ENCODE measurements at regions of chr5 and their contacts with region 1.

Region 1: DNA sequence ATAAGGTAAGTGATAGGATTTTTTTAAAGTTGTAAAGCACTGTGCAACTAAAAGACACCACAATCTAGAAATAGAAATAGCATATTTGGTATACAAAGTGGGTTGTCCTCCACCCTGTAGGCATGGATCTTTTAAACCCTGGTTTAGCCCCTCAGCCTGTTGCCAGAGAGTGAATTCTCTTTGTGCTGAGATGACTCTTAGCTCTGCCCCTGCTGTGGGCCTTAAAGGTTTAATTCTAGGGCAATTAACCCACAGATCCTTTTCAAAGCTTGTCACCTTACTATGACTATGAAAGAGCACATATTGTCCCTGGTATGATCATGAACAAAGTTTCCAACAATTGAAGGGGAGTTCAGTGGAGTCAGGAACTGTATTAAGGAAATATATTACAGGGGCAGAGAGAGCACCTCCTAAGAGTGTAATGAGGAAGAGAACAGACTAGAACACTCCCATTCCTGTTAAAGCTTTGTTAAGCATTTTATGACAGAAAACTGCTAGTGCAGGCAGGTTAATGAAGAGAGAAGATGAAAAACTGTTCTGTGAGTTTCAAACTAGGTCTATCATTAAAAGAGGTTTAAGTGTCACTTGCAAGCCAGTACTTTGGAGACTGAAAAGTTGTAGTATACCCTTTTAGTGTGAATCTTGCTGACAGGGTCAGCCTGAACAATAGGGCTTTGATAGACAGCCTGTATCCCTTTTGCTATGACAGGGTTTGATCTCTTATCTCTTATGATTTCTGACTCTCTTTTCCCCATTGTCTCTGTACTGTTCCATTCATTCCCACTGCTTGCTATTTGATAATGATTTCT is 104.1 kb upstream of the ELL2 start:
- DNase-seq: peak; percentile 38
- H3K4me3 Mint-ChIP-seq: no peak overlapping the region
- H3K27ac Mint-ChIP-seq: peak overlapping the region; percentile 83
- H3K4me1 Mint-ChIP-seq: peaks cover 48% of the 10 kb centered on the region
- H3K27me3 Mint-ChIP-seq: no peaks in the 10 kb centered on the region

Region 2: GRCh38 chr5:96079075-96079474 is 13.3 kb after region 1 on chr5:
- CTCF ChIA-PET with region 1: interaction called, 7 read pairs
- POLR2A ChIA-PET with region 1: interaction called, 7 read pairs
- intact Hi-C with region 1: loop called (anchors 1 kb)
- DNase-seq: peak; percentile 67
- H3K4me3 Mint-ChIP-seq: no peak overlapping the region
- H3K27ac Mint-ChIP-seq: peak overlapping the region; percentile 89
- H3K4me1 Mint-ChIP-seq: peaks cover 45% of the 10 kb centered on the region
- H3K27me3 Mint-ChIP-seq: peaks cover 5% of the 10 kb centered on the region

Measured in activated CD4-positive, alpha-beta memory T cell treated with anti-CD3 and anti-CD28 coated beads for 36 hours (primary cell).